Sigmoid colon (tissue), 7 donors: ENCODE measurements at regions of chr6 and their contacts with region 1.

Region 1: GRCh38 chr6:30828027-30828960 is 56.0 kb upstream of the DDR1 start:
- DNase-seq: peak; percentile 96
- H3K4me3 ChIP-seq: peak overlapping the region in 2 of 4 donors; percentile 1 to 13
- H3K27ac ChIP-seq: peak overlapping the region; percentile 71 to 86 (median 80)
- H3K4me1 ChIP-seq: peaks cover 0 to 32% (median 22%) of the 10 kb centered on the region in 4 donors
- H3K27me3 ChIP-seq: no peaks in the 10 kb centered on the region
- CTCF ChIP-seq: peak; percentile 83 to 98 (median 87)
- EP300 ChIP-seq: peak in 3 of 4 donors; percentile 16 to 59 (median 27)
- POLR2A ChIP-seq: no peak

Region 2: DNA sequence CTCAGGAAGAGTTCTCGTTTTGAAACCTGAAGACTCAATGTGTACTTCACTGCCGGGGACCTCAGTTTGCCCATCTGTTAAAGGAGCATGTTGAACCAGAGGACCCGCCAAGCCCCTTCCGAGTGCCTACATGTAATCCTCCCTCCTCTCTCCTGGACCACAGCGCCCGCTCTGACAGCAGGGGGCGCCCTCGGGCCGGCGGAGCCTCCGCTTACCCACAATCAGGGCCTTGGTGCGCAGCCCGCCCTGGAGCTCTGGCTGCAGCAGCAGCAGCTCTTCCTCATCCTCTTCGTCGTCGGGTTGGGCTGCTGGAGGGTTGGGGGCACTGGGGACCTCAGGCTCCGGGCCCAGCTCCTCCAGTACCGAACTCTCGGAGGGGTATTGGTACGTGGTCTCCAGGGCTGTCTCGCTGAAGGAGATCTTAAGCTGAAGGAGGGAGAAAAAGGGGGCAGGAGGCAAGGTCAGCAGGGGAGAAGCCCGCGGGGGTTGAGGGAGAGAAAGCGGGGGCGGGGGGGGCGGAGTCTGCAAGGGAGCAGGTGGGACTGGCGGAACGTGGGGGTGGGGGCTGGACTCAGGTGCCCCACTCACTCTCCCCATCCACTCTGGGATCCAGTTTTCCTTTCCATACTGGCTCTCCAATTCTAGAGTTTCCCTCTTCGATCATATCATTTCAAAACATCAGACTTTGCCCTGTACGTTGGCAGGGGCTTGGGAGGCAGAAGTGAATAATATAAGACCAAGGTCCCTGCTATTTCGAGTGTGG is 149.1 kb before region 1 on chr6:
- intact Hi-C with region 1: loop called (anchors 5 kb)
- DNase-seq: peak; percentile 94
- H3K4me3 ChIP-seq: peak overlapping the region in 2 of 4 donors; percentile 63 to 79
- H3K27ac ChIP-seq: peak overlapping the region; percentile 94 to 99 (median 98)
- H3K4me1 ChIP-seq: peaks cover 0 to 58% (median 53%) of the 10 kb centered on the region in 4 donors
- H3K27me3 ChIP-seq: no peaks in the 10 kb centered on the region
- CTCF ChIP-seq: peak; percentile 92 to 98 (median 97)
- EP300 ChIP-seq: no peak
- POLR2A ChIP-seq: no peak

Region 3: GRCh38 chr6:30742316-30743098 is 85.8 kb before region 1 on chr6 and contains the start of gene FLOT1:
- intact Hi-C with region 1: loop called (anchors 5 kb)
- DNase-seq: peak; percentile 99
- H3K4me3 ChIP-seq: peak within 1 kb of the TSS; percentile 71 to 90 (median 82)
- H3K27ac ChIP-seq: peak within 1 kb of the TSS; percentile 90 to 98 (median 96)
- H3K4me1 ChIP-seq: peaks cover 3 to 52% (median 42%) of the 10 kb centered on the region in 4 donors
- H3K27me3 ChIP-seq: no peaks in the 10 kb centered on the region
- CTCF ChIP-seq: no peak
- EP300 ChIP-seq: no peak
- POLR2A ChIP-seq: peak; percentile 80 to 87
- total RNA-seq, gene FLOT1: 141 to 206 (median 160) TPM

Region 4: DNA sequence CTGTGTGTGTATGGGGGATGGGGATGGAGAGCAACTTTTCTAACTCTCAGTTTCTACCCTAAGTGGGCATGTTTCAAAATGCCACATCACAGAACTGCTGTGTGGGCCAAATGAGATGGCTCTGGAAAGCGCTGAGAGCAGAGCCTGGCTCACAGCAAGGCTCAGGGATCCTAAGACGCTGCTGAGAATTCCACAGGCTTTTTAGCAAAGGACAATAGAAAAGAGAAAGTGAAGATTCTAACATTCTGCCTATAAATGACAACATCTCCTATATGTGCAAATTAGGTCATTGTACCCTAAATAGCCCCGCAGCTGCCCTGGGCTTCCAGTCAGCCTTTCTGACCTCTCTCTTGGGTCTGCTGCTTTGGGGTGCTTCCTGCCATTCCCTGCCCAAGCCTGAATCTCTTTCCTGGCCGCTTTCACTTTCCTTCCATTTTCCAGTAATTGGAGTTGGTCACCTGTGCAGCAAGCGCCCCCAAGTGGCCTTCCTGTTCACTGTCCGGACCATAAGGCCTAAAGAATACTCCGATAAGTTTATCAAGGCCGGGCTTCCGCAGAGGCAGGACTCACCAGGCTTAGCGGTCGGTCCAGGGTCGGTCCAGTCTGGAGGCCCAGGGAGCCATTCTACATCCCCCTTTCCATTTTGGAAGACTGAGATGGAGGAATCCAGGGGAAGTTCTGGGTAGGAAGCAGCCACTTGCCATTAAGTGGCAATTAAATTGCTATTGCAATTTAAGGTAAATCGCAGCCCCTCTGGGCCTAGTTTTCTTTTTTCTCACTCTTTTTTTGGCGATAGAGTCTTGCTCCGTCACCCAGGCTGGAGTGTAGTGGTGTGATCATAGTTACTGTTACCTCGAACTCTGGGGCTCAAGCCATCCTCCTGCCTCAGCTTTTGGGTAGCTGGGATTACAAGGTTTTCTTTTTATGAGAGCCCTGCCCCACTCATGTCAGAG is 49.4 kb after region 1 on chr6:
- intact Hi-C with region 1: loop called (anchors 1 kb)
- DNase-seq: peak; percentile 95
- H3K4me3 ChIP-seq: peak overlapping the region in 3 of 4 donors; percentile 34 to 44 (median 42)
- H3K27ac ChIP-seq: peak overlapping the region; percentile 81 to 94 (median 88)
- H3K4me1 ChIP-seq: peaks cover 0 to 39% (median 26%) of the 10 kb centered on the region in 4 donors
- H3K27me3 ChIP-seq: no peaks in the 10 kb centered on the region
- CTCF ChIP-seq: peak; percentile 87 to 96 (median 92)
- EP300 ChIP-seq: no peak
- POLR2A ChIP-seq: no peak

Region 5: DNA sequence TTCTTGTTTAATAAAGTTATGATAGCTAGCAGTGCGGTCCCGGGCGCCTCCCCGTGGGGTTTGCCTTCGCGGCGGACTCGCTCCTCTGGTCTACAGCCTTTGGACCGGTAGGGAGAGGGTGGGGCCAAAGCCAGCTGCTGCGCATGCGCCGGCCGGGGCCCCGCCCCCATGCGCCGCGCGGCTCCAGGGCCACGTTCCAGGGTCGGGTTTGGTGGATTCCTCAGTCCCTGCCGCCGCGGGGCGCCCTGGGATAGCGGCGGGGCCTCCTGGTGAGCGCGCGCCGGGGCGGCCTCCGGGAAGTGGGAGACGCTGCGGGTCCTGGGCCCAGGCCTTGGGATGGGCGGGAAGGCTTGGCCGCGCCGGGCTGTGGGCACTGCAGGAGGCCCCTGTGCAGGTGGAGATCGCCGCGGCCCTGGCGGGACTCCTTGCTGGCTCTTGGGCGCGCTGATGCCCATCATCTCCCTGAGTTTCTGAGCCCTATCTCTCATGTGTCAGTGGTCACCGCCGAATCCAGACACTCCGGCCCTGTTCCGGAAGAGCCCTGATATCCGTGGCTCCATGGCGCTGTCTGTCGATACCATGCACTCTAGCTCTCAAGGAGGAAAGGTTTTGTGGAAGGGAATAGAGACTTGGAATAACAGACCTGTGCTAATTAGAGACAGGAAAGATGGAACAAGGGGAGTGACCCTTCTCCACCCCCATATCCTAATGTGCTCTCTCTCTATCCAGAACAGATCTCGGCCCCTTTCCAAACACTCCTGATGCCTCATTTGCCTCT is 86.0 kb after region 1 on chr6 and contains the start of gene VARS2:
- intact Hi-C with region 1: loop called (anchors 1 kb)
- DNase-seq: peak; percentile 96
- H3K4me3 ChIP-seq: peak within 1 kb of the TSS; percentile 46 to 65 (median 56)
- H3K27ac ChIP-seq: peak within 1 kb of the TSS; percentile 91 to 95 (median 92)
- H3K4me1 ChIP-seq: peaks cover 0 to 26% (median 22%) of the 10 kb centered on the region in 4 donors
- H3K27me3 ChIP-seq: no peaks in the 10 kb centered on the region
- CTCF ChIP-seq: peak in 2 of 4 experiments; percentile 24 to 34
- EP300 ChIP-seq: peak in 1 of 4 donors; percentile 24
- POLR2A ChIP-seq: peak; percentile 63 to 79
- total RNA-seq, gene VARS2: 6.7 to 13.0 (median 9.0) TPM

Region 6: DNA sequence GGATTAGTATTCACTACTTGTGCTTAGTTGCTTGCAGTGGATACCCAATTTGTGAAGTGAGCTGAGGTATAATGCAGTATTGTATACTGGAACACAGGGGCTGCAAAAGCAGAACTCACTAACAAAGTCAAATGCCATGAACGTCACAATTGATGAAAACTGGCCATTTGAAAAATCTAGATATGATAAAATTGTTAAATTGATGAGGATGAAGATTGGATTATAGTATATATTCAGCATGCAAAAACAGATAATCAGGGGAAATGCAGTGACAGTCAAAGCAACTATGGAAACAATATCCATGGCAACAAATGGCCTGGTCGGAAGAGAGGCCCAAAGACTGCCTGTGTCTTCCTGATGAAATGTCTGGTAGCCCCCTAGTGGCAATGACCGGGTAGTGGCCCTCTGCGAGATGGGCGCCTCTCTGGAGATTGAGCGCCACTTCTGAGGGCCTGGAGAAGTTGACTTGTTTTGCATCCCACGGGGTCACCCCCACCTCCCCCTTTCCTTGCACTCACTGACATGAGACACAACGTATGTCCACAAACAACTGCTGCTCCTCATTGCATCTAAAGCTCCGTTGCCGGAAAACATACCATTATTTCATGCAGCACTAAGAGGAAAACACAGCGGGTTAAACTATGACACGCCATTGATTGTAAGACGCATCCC is 240.5 kb after region 1 on chr6:
- intact Hi-C with region 1: loop called (anchors 5 kb)
- DNase-seq: peak; percentile 78
- H3K4me3 ChIP-seq: no peak overlapping the region
- H3K27ac ChIP-seq: no peak overlapping the region
- H3K4me1 ChIP-seq: peaks cover 0 to 18% (median 14%) of the 10 kb centered on the region in 4 donors
- H3K27me3 ChIP-seq: peaks cover 0 to 16% (median 4%) of the 10 kb centered on the region in 3 donors
- CTCF ChIP-seq: peak; percentile 54 to 89 (median 74)
- EP300 ChIP-seq: no peak
- POLR2A ChIP-seq: no peak

Region 7: DNA sequence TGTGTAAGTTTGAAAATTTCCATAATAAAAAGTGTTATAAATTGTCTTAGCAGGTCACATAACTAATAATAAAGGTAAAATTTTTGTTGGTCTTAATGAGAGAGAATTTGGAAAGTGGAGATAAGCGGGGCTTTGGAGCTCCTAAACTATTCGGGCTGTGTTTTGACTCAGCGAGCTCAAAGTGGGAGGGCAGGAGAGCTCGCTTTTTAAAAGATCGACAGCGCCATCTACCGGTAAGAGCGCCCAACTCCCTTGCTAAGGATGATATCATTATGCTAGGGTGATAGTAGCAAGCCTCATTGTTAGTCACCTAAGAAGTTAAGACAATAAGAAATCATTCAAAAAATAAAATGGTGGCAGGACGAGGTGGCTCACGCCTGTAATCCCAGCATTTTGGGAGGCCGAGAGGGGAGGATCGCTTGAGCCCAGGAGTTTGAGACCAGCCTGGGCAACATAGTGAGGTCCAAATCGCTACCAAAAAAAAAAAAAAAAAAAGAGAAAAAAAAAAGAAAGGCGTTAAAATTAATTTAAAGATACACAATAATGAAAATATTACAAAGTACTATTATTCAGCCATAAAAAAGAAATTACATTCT is 259.3 kb after region 1 on chr6:
- intact Hi-C with region 1: loop called (anchors 5 kb)
- DNase-seq: peak; percentile 89
- H3K4me3 ChIP-seq: no peak overlapping the region
- H3K27ac ChIP-seq: no peak overlapping the region
- H3K4me1 ChIP-seq: peaks cover 0 to 10% (median 3%) of the 10 kb centered on the region in 4 donors
- H3K27me3 ChIP-seq: peaks cover 0 to 11% (median 0%) of the 10 kb centered on the region in 3 donors
- CTCF ChIP-seq: peak in 3 of 4 experiments; percentile 69 to 74 (median 74)
- EP300 ChIP-seq: no peak
- POLR2A ChIP-seq: no peak